Caco-2 (cell line): ENCODE measurements at regions of chrX and their contacts with region 1.

Region 1: DNA sequence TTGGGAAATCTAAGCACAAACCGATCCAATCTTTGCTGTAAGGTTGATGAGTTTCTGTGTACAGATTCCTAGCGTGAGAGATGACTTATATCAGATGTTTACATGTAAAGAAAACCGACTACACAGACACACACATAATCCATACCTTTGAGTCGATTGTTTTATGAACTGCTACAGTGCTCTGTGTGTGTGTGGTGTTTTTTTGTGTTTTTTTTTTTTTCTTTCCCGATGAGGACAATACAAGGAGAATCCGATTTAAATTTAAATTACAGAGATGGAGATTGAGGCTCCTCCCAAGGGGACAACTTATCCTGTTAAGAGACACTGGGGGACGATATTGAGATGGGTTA is 469 bp upstream of the SLC9A6 start:
- DNase-seq: no peak
- H3K4me3 ChIP-seq: peak overlapping the region; percentile 63
- H3K4me3 Mint-ChIP-seq: peak overlapping the region; percentile 76
- H3K27ac Mint-ChIP-seq: peak overlapping the region; percentile 73
- H3K4me1 ChIP-seq: no peaks in the 10 kb centered on the region
- H3K4me1 Mint-ChIP-seq: peaks cover 22% of the 10 kb centered on the region
- H3K27me3 ChIP-seq: no peaks in the 10 kb centered on the region
- H3K27me3 Mint-ChIP-seq: no peaks in the 10 kb centered on the region
- CTCF ChIP-seq: no peak

Region 2: GRCh38 chrX:135384161-135384836 is 600.5 kb before region 1 on chrX:
- CTCF ChIA-PET with region 1: no interaction called
- POLR2A ChIA-PET with region 1: no interaction called
- intact Hi-C with region 1: no loop called
- DNase-seq: no peak
- H3K4me3 ChIP-seq: no peak overlapping the region
- H3K4me3 Mint-ChIP-seq: no peak overlapping the region
- H3K27ac Mint-ChIP-seq: no peak overlapping the region
- H3K4me1 ChIP-seq: no peaks in the 10 kb centered on the region
- H3K4me1 Mint-ChIP-seq: peaks cover 8% of the 10 kb centered on the region
- H3K27me3 ChIP-seq: no peaks in the 10 kb centered on the region
- H3K27me3 Mint-ChIP-seq: no peaks in the 10 kb centered on the region
- CTCF ChIP-seq: no peak

Region 3: DNA sequence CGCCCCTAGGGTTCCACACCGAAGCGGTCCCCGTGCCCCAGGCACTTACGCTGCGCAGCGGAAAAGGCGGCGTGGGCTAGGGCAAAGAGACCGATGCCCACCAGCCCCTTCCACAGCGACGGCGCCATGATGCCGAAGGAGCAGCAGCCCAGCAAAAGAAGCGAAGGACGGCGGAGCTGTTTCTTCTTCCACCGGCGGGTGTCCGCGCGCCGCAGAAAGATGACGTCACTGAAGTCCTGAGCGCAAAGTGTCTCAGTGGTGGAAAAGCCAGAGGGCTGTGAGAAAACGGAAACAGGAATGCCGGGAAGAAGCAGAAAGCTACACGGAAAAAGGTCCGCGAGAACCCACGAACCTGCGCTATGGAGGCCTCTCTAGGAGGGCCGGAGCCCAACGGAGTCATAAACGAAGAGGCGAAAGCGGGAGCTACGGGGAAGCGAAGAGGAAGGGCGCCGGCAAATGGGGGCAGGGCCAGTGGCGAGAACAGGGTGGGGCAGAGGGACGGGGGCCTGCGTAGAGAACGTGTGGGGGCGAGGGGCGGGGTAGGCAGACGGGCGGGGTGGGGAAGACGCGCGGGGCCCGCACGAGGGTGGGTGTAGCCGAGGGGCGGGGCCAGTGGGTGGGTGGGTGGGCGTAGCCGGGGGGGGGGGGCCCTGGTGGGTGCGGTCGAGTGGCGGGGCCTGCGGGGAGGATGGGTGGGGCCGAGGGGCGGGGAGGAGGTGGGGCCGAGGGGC is 11.1 kb before region 1 on chrX and contains the start of gene MMGT1:
- CTCF ChIA-PET with region 1: no interaction called
- POLR2A ChIA-PET with region 1: no interaction called
- intact Hi-C with region 1: loop called (anchors 1 kb)
- DNase-seq: peak; percentile 79 to 84
- H3K4me3 ChIP-seq: peak within 1 kb of the TSS; percentile 92
- H3K4me3 Mint-ChIP-seq: peak within 1 kb of the TSS; percentile 99
- H3K27ac Mint-ChIP-seq: peak within 1 kb of the TSS; percentile 99
- H3K4me1 ChIP-seq: no peaks in the 10 kb centered on the region
- H3K4me1 Mint-ChIP-seq: peaks cover 7% of the 10 kb centered on the region
- H3K27me3 ChIP-seq: no peaks in the 10 kb centered on the region
- H3K27me3 Mint-ChIP-seq: no peaks in the 10 kb centered on the region
- CTCF ChIP-seq: no peak
- total RNA-seq, gene MMGT1: 17.3 and 18.3 TPM in 2 replicates

Region 4: DNA sequence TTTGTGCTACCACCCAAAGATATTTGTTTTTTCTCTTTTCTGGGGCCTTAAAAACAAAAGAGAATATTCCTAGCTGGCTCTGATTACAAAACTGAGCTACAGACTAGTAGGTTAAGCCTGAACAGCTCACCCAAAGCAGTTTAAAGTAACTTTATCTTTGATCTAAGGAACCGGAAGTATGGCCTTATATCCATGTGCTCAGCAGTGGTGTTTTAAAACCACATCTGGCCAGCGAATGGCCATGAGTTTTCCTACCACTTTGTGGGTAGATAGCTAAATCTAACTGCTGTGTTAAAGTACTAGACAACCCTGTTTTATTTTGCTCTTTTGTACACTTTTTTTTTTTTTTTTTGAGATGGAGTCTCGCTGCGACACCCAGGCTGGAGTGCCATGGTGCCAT is 340.6 kb after region 1 on chrX:
- CTCF ChIA-PET with region 1: no interaction called
- POLR2A ChIA-PET with region 1: no interaction called
- intact Hi-C with region 1: no loop called
- DNase-seq: no peak
- H3K4me3 ChIP-seq: no peak overlapping the region
- H3K4me3 Mint-ChIP-seq: no peak overlapping the region
- H3K27ac Mint-ChIP-seq: no peak overlapping the region
- H3K4me1 ChIP-seq: no peaks in the 10 kb centered on the region
- H3K4me1 Mint-ChIP-seq: no peaks in the 10 kb centered on the region
- H3K27me3 ChIP-seq: no peaks in the 10 kb centered on the region
- H3K27me3 Mint-ChIP-seq: no peaks in the 10 kb centered on the region
- CTCF ChIP-seq: no peak